BJ (cell line): ENCODE measurements at regions of chr17 and their contacts with region 1.

Region 1: DNA sequence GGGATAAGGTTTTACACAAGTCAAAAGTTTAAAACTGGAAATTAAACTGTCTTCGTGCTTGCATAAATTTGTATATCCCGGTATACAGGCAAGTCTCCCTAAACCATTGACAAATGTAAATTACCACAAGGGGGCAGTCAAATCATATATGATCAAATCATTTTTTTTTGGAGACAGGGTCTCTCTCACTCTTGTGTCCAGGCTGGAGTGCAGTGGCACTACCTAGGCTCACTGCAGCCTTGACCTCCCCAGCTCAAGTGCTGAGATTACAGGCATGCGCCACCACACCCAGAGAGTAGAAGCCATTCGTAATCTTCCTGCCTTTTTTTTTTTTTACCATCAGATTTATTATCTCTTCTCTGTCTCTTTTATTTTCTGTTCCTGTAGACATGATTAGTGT is 18.5 kb downstream of the TOP2A start:
- DNase-seq: peak; percentile 5
- H3K4me3 ChIP-seq: no peak overlapping the region
- H3K27me3 ChIP-seq: no peaks in the 10 kb centered on the region
- CTCF ChIP-seq: peak; percentile 58

Region 2: DNA sequence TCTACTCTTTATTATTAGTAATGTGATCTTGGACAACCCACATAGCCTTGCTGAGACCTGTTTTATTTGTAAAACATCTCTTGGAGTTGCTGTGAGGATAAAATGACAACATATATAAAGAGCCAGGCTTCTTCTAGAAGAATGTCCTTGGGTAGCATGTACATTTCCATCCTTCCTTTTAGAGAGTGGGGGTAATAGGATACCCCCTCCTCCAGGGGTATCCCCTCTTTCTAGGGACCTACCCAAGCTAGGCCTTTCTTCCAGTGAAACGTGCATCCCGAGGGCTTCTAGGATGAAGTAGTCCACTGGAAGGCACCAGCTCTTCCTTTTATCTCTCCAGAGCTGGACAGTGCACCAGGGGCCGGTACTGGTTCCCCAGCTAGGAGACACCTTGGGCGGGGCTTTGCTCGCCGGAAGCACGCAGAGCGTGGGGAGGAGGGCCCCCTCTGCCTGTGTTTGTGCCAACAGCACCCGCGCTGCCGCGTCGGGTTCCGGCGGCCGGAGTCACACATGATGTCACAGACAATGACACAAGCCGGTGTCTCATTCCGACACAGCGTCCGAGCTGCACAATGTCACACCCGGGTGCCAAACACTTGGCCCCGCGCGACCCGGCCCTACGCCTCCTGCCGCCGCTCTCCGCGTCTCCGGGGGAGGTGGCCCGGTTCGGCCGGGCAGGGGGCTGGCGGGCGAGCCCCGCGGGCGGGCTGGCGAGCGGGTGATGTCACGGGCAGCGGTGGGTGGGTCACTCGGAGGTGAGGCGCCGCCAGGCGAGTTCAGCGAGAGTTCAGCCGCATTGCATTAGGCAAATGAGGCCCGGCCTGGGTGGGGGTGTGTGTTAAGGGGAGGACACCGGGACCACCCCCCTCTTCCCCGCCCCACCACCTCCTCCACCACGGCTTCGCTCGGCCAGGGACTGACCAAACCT is 58.0 kb before region 1 on chr17:
- CTCF ChIA-PET with region 1: no interaction called
- POLR2A ChIA-PET with region 1: no interaction called
- DNase-seq: no peak
- H3K4me3 ChIP-seq: peak overlapping the region; percentile 84
- H3K27me3 ChIP-seq: no peaks in the 10 kb centered on the region
- CTCF ChIP-seq: peak; percentile 31

Region 3: GRCh38 chr17:40387680-40388079 is 11.5 kb before region 1 on chr17:
- CTCF ChIA-PET with region 1: interaction called, 13 read pairs
- POLR2A ChIA-PET with region 1: no interaction called
- DNase-seq: no peak
- H3K4me3 ChIP-seq: no peak overlapping the region
- H3K27me3 ChIP-seq: no peaks in the 10 kb centered on the region
- CTCF ChIP-seq: no peak

Region 4: GRCh38 chr17:40539711-40540411 is 140.7 kb after region 1 on chr17:
- CTCF ChIA-PET with region 1: no interaction called
- POLR2A ChIA-PET with region 1: no interaction called
- DNase-seq: no peak
- H3K4me3 ChIP-seq: no peak overlapping the region
- H3K27me3 ChIP-seq: no peaks in the 10 kb centered on the region
- CTCF ChIP-seq: no peak

Region 5: GRCh38 chr17:40596261-40596919 is 197.2 kb after region 1 on chr17:
- CTCF ChIA-PET with region 1: no interaction called
- POLR2A ChIA-PET with region 1: no interaction called
- DNase-seq: no peak
- H3K4me3 ChIP-seq: no peak overlapping the region
- H3K27me3 ChIP-seq: peaks cover 7% of the 10 kb centered on the region
- CTCF ChIP-seq: no peak